CD4-positive, alpha-beta memory T cell (primary cell): ENCODE measurements at regions of chr19 and their contacts with region 1.

Region 1: DNA sequence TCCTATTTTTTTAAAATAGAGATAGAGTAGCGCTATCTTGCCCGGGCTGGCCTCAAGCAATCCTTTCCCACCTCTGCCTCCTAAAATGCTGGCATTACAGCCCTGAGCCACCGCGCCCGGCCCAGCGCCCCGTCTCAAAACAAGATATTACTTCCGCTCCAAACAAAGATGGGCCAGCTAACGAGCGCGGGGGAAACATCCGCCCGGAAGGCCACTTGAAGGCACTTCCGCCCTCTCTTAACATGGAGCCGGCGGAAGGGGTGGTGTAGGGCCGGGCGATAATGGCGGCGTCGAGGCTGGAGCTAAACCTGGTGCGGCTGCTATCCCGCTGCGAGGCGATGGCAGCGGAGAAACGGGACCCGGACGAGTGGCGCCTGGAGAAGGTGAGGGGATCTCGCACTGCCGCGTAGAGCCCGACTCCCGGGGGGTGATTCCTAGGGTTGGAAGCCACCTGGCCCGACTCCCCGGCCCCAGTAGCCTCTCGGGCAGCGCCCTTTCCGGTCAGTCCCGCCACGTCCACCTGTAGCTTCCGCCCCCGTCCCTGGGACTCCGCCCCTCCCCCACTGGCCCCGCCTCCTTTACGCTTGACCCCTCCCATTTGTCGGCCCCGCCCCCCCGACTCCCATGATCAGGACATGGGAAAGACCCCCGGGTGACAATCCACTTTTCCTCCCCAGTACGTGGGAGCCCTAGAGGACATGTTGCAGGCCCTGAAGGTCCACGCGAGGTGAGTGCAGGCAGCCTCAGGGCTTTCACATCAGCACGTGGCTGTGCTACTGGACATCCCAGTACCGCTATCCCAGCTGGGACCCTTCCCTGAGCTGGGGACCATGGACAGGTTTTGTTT is at the start of gene USE1:
- DNase-seq: peak; percentile 86 to 92 (median 88)
- H3K4me3 ChIP-seq: peak within 1 kb of the TSS; percentile 42 to 95
- H3K4me3 Mint-ChIP-seq: peak within 1 kb of the TSS; percentile 86 to 95 (median 91)
- H3K27ac ChIP-seq: peak within 1 kb of the TSS; percentile 79
- H3K27ac Mint-ChIP-seq: peak within 1 kb of the TSS; percentile 87 to 99 (median 99)
- H3K4me1 ChIP-seq: peaks cover 16% of the 10 kb centered on the region
- H3K4me1 Mint-ChIP-seq: peaks cover 2 to 21% (median 13%) of the 10 kb centered on the region in 4 donors
- H3K27me3 ChIP-seq: no peaks in the 10 kb centered on the region
- H3K27me3 Mint-ChIP-seq: no peaks in the 10 kb centered on the region
- total RNA-seq, gene USE1: 38.1 to 42.8 TPM

Region 2: DNA sequence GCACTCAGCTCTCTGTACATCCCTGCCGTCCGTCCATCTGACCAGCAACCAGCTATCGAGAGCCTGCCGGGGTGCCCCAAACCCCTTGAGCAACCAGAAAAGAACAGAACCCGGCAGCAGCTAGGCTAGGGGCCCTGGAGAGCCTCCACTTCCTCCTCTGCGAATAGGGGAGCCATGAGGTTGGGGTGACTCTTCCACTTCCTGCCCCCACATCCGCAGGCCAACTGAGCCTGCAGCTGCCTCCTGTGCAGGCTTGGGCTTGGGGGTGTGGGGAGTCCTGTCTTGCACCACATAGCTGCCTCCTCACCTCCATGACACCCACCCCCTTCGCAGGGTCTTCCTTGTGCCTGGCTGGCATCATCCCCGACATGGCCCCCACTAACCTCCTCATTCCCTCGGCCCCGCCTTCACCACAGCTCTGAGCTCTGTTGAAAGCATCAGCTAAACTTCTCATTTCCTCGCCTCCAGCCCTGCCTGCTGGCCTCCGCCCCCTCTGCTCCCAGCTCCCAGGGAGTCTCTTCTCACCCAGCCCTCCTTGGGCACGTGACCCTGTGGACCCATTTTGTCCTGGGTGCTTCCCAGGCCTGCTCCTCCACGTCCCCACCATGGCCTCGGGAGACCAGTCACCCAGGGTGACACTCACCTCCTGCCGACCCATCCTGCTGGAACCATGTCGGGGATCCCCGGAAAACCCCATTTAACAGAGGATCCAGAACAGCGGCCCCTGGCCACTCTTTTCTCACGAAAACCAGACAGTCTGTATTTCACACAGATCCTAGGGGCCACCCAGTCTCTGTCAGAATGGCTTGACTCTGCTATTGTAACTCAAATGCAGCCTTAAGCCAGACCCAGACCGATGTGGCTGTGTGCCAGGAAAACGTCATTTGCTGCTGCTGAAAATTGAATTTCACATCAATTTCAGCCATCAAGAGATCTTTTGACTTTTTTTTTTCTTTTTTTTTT is 89.4 kb before region 1 on chr19:
- CTCF ChIA-PET with region 1: no interaction called
- POLR2A ChIA-PET with region 1: interaction called, 29 read pairs
- intact Hi-C with region 1: no loop called
- DNase-seq: peak; percentile 82 to 91 (median 87)
- H3K4me3 ChIP-seq: peak overlapping the region; percentile 51 to 73
- H3K4me3 Mint-ChIP-seq: peak overlapping the region; percentile 79 to 93 (median 91)
- H3K27ac ChIP-seq: peak overlapping the region; percentile 76
- H3K27ac Mint-ChIP-seq: peak overlapping the region; percentile 97 to 99 (median 99)
- H3K4me1 ChIP-seq: peaks cover 52% of the 10 kb centered on the region
- H3K4me1 Mint-ChIP-seq: peaks cover 23 to 61% (median 40%) of the 10 kb centered on the region in 4 donors
- H3K27me3 ChIP-seq: no peaks in the 10 kb centered on the region
- H3K27me3 Mint-ChIP-seq: no peaks in the 10 kb centered on the region

Region 3: GRCh38 chr19:17136021-17136420 is 79.3 kb before region 1 on chr19:
- CTCF ChIA-PET with region 1: no interaction called
- POLR2A ChIA-PET with region 1: no interaction called
- intact Hi-C with region 1: no loop called
- DNase-seq: no peak
- H3K4me3 ChIP-seq: no peak overlapping the region
- H3K4me3 Mint-ChIP-seq: no peak overlapping the region
- H3K27ac ChIP-seq: no peak overlapping the region
- H3K27ac Mint-ChIP-seq: peak overlapping the region in 1 of 7 donors; percentile 69
- H3K4me1 ChIP-seq: no peaks in the 10 kb centered on the region
- H3K4me1 Mint-ChIP-seq: peaks cover 0 to 9% (median 2%) of the 10 kb centered on the region in 4 donors
- H3K27me3 ChIP-seq: no peaks in the 10 kb centered on the region
- H3K27me3 Mint-ChIP-seq: no peaks in the 10 kb centered on the region

Region 4: GRCh38 chr19:17183858-17184321 is 31.5 kb before region 1 on chr19:
- CTCF ChIA-PET with region 1: interaction called, 4 read pairs
- POLR2A ChIA-PET with region 1: interaction called, 41 read pairs
- intact Hi-C with region 1: no loop called
- DNase-seq: peak in 4 of 5 donors; percentile 24 to 35 (median 31)
- H3K4me3 ChIP-seq: peak overlapping the region; percentile 5 to 43
- H3K4me3 Mint-ChIP-seq: peak overlapping the region; percentile 86 to 92 (median 90)
- H3K27ac ChIP-seq: peak overlapping the region; percentile 58
- H3K27ac Mint-ChIP-seq: peak overlapping the region; percentile 82 to 98 (median 96)
- H3K4me1 ChIP-seq: peaks cover 22% of the 10 kb centered on the region
- H3K4me1 Mint-ChIP-seq: peaks cover 16 to 27% (median 19%) of the 10 kb centered on the region in 4 donors
- H3K27me3 ChIP-seq: no peaks in the 10 kb centered on the region
- H3K27me3 Mint-ChIP-seq: no peaks in the 10 kb centered on the region

Region 5: DNA sequence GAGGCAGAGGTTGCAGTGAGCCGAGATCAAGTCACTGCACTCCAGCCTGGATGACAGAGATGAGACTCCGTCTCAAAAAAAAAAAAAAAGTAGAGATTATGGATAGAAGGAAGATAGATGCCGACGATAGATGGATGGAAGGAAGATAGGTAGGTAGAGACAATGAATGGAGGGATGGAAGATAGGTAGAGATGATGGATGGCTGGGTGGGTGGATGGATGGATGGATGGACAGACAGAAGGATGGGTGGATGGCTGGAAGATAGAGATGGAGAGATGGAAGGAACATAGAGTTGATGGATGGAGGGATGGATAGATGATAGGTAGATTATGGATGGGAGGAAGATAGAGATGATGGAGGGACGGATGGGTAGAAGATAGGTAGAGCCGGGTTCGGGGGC is 18.7 kb before region 1 on chr19:
- CTCF ChIA-PET with region 1: no interaction called
- POLR2A ChIA-PET with region 1: no interaction called
- intact Hi-C with region 1: no loop called
- DNase-seq: no peak
- H3K4me3 ChIP-seq: no peak overlapping the region
- H3K4me3 Mint-ChIP-seq: no peak overlapping the region
- H3K27ac ChIP-seq: no peak overlapping the region
- H3K27ac Mint-ChIP-seq: peak overlapping the region in 5 of 7 donors; percentile 17 to 80 (median 70)
- H3K4me1 ChIP-seq: no peaks in the 10 kb centered on the region
- H3K4me1 Mint-ChIP-seq: peaks cover 0 to 4% (median 2%) of the 10 kb centered on the region in 4 donors
- H3K27me3 ChIP-seq: no peaks in the 10 kb centered on the region
- H3K27me3 Mint-ChIP-seq: no peaks in the 10 kb centered on the region

Region 6: GRCh38 chr19:17226002-17226933 is 10.9 kb after region 1 on chr19 and contains the start of gene OCEL1:
- CTCF ChIA-PET with region 1: interaction called, 8 read pairs
- POLR2A ChIA-PET with region 1: interaction called, 134 read pairs
- intact Hi-C with region 1: loop called (anchors 1 kb)
- DNase-seq: peak; percentile 96 to 98 (median 97)
- H3K4me3 ChIP-seq: peak within 1 kb of the TSS; percentile 73 to 90
- H3K4me3 Mint-ChIP-seq: peak within 1 kb of the TSS; percentile 95 to 99 (median 95)
- H3K27ac ChIP-seq: peak within 1 kb of the TSS; percentile 73
- H3K27ac Mint-ChIP-seq: peak within 1 kb of the TSS; percentile 98 to 99 (median 98)
- H3K4me1 ChIP-seq: peaks cover 14% of the 10 kb centered on the region
- H3K4me1 Mint-ChIP-seq: peaks cover 4 to 19% (median 7%) of the 10 kb centered on the region in 4 donors
- H3K27me3 ChIP-seq: no peaks in the 10 kb centered on the region
- H3K27me3 Mint-ChIP-seq: no peaks in the 10 kb centered on the region
- total RNA-seq, gene OCEL1: 23.9 to 29.3 TPM

Region 7: DNA sequence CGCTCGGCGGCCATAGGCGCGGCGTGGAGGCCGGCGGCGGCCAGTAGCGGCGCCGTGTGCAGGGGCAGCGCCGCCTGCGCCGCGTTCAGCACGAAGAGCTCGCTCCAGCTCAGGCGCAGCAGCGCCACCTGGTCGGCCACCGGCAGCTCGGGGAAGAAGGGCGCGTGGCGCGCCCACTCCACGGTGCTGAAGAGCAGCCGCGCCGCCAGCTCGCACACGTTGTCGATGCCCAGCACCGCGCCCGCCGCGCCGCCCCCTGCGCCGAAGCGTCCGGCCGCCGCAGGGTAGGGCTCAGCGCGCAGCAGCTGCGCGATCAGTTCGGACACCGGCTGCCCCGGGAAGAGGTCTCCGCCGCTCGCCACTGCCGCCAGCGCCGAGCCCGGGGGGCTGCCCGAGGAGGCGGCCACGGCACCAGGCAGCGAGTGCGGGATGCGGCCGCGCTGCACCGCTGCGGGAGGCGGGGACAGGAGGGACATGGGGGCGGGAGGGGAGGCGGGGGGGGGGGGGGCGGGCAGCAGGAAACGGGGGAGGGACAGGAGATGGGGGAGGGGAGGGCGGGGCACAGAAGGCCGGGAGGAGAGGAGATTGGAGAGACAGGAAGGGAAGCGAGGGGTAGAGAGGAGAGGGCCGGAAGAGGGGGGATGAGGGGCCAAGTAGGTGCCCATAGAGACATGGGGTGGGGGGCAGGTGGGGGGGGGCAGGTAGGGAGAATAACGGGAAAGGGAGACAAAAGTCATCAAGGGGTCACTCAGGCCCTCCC is 20.4 kb after region 1 on chr19:
- CTCF ChIA-PET with region 1: interaction called, 10 read pairs
- POLR2A ChIA-PET with region 1: interaction called, 51 read pairs
- intact Hi-C with region 1: loop called (anchors 2 kb)
- DNase-seq: peak; percentile 71 to 77 (median 73)
- H3K4me3 ChIP-seq: peak overlapping the region; percentile 69 to 84
- H3K4me3 Mint-ChIP-seq: peak overlapping the region; percentile 70 to 85 (median 78)
- H3K27ac ChIP-seq: peak overlapping the region; percentile 40
- H3K27ac Mint-ChIP-seq: peak overlapping the region in 1 of 7 donors; percentile 64
- H3K4me1 ChIP-seq: peaks cover 20% of the 10 kb centered on the region
- H3K4me1 Mint-ChIP-seq: peaks cover 2 to 28% (median 6%) of the 10 kb centered on the region in 4 donors
- H3K27me3 ChIP-seq: no peaks in the 10 kb centered on the region
- H3K27me3 Mint-ChIP-seq: no peaks in the 10 kb centered on the region

Region 8: DNA sequence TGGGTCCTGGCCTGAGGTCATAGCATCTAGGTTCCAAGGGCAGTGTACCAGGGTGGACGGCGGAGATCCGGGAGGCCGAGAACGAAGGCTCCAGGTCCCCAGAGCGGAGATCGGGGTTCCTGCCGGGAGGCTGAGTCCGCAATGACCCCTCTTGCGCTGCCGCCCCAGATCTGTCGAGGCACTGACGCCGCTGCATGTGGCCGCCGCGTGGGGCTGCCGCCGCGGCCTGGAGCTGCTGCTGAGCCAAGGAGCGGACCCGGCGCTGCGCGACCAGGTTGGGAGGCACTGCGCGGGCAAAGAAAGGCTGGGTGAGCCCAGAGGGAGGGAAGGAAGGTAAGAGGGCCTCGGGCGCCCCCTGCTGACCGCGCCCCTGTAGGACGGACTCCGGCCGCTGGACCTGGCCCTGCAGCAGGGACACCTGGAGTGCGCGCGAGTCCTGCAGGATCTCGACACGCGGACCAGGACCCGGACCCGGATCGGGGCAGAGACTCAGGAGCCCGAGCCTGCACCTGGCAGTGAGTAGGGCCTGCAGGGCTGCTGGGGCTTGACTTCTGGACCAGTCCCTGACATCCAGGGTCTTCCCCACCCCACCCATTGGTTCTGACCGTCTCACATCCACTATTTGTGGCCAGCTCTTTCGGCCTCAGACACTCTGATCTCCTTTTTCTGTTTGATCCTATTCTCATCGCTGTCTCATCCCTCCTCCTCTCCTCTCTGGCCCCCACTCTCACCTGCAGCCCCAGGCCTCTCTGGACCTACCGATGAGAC is 67.3 kb after region 1 on chr19:
- CTCF ChIA-PET with region 1: no interaction called
- POLR2A ChIA-PET with region 1: no interaction called
- intact Hi-C with region 1: no loop called
- DNase-seq: peak; percentile 72 to 79 (median 74)
- H3K4me3 ChIP-seq: peak overlapping the region; percentile 17 to 45
- H3K4me3 Mint-ChIP-seq: peak overlapping the region; percentile 73 to 86 (median 80)
- H3K27ac ChIP-seq: no peak overlapping the region
- H3K27ac Mint-ChIP-seq: peak overlapping the region in 2 of 7 donors; percentile 24 to 42
- H3K4me1 ChIP-seq: peaks cover 17% of the 10 kb centered on the region
- H3K4me1 Mint-ChIP-seq: peaks cover 2 to 4% (median 3%) of the 10 kb centered on the region in 4 donors
- H3K27me3 ChIP-seq: no peaks in the 10 kb centered on the region
- H3K27me3 Mint-ChIP-seq: no peaks in the 10 kb centered on the region

Region 9: DNA sequence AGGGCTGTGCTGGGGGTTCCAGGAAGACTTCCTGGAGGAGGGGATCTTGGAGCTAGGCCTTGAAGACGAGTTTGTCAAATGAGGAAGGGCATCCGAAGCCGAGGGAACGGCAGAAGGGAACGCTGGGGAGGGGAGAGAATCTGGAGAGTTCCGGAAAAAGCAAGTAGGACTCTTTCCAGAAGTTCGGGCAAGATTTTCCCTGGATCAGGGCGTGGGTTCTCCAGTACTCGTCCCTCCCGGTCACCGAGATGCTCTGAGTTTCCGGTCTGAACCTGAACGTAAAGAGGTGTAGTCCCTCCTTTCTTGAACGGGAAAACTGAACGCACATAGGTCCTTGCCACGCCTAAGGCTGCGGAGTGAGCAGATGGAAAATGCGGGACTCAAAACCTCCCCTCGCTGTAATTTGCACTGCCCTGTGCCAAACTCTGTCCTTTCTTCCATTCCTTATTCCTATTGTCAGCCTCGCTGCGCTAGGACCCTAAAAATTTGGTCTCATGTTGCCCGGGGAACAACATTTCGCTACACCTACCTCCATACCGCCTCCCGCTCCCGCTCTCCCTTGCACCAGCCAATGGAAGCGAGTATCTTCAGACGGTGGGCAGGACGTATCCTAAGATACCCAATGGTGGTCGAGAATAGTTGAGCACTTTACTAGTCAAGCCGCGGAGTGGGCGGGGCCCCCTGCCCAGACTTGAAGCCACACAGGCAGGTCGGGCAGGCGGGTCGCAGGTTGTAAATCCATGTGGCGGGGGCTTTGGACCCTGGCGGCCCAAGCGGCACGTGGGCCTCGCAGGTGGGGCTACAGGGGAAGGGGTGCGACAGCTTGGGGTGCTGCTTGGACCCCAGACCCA is 121.7 kb after region 1 on chr19 and contains the start of gene GTPBP3:
- CTCF ChIA-PET with region 1: no interaction called
- POLR2A ChIA-PET with region 1: no interaction called
- intact Hi-C with region 1: loop called (anchors 1 kb)
- DNase-seq: peak; percentile 93 to 99 (median 97)
- H3K4me3 ChIP-seq: peak within 1 kb of the TSS; percentile 52 to 99
- H3K4me3 Mint-ChIP-seq: peak within 1 kb of the TSS; percentile 90 to 98 (median 94)
- H3K27ac ChIP-seq: peak within 1 kb of the TSS; percentile 84
- H3K27ac Mint-ChIP-seq: peak within 1 kb of the TSS; percentile 90 to 99 (median 97)
- H3K4me1 ChIP-seq: peaks cover 47% of the 10 kb centered on the region
- H3K4me1 Mint-ChIP-seq: peaks cover 18 to 53% (median 32%) of the 10 kb centered on the region in 4 donors
- H3K27me3 ChIP-seq: no peaks in the 10 kb centered on the region
- H3K27me3 Mint-ChIP-seq: no peaks in the 10 kb centered on the region
- total RNA-seq, gene GTPBP3: 53.7 to 58.4 TPM